GM12878 (cell line): ENCODE measurements at regions of chr10 and their contacts with region 1.

Region 1: DNA sequence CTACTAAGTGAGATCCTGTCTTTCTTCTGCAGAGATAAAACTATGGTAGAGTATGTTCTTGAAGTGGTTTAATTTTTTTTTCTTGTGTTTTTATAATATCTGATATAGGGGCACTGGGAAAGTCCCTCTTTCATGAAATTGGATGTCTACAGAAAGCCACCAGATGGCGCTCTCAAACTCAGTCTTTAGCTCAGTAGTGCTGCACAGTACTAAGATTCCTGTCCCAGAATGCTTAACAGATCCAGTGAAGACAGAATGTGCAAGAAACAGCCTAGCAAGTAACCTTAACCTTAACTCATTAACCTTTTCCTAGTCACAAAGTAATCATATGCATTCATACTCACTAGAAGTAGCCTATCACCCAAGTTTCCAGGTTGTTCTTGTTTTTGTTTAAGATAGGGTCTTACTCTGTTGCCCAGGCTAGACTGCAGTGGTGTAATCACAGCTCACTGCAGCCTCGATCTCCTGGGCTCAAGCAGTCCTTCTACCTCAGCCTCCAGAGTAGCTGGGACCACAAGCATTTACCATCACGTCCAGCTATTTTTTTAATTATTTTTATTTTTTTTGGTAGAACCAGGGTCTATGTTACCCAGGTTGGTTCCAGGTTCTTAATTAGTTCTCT is 56.7 kb downstream of the IDE start:
- DNase-seq: peak; percentile 38
- ATAC-seq: peak; percentile 100
- H3K4me3 ChIP-seq: no peak overlapping the region
- H3K27ac ChIP-seq: no peak overlapping the region
- H3K4me1 ChIP-seq: no peaks in the 10 kb centered on the region
- H3K27me3 ChIP-seq: no peaks in the 10 kb centered on the region
- CTCF ChIP-seq: peak; percentile 69 to 81 (median 74)
- EP300 ChIP-seq: no peak
- POLR2A ChIP-seq: no peak
- RAD21 ChIP-seq: peak; percentile 76

Region 2: DNA sequence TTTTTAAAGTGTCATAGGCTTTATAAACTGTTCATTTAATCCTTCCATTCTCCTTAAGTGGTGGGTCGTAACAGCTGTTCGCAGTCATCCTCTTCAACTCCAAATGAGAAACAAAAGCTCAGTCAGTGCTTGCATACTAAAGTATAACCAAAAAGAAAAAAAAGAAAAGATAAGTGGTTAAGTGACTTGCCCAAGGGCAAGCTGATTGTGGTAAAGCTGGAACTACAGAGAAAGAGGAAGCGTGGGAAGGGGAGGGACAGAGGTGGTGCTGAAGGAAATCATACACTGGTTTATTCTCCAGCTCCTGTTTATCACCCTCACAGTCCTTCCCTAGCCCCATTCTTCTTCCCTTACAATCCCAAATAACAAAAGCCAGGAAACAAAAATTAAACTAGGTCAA is 27.2 kb after region 1 on chr10:
- CTCF ChIA-PET with region 1: interaction called, 11 read pairs
- POLR2A ChIA-PET with region 1: no interaction called
- RAD21 ChIA-PET with region 1: no interaction called
- SMC1A ChIA-PET with region 1: interaction called, 7 read pairs
- in situ Hi-C with region 1: no loop called
- intact Hi-C with region 1: no loop called
- DNase-seq: peak; percentile 35
- ATAC-seq: peak; percentile 78
- H3K4me3 ChIP-seq: no peak overlapping the region
- H3K27ac ChIP-seq: no peak overlapping the region
- H3K4me1 ChIP-seq: peaks cover 8% of the 10 kb centered on the region
- H3K27me3 ChIP-seq: no peaks in the 10 kb centered on the region
- CTCF ChIP-seq: no peak
- EP300 ChIP-seq: no peak
- POLR2A ChIP-seq: no peak
- RAD21 ChIP-seq: no peak

Region 3: DNA sequence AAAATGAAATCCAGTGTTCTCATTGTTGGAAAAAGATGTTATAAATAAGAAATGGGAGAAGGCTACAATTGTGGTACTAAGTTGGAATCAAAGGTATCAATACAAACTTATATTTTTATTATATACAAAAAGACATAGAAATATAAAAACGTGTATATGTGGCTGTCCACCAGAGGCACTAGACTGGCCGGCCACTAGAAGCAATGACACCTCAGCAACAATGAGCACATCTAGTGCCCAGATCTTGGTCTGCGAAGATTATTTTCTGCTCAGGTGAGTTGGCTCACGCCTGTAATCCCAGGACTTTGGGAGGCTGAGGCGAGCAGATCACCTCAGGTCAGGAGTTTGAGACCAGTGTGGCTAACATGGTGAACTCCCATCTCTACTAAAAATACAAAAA is 35.2 kb after region 1 on chr10:
- CTCF ChIA-PET with region 1: interaction called, 10 read pairs
- POLR2A ChIA-PET with region 1: no interaction called
- RAD21 ChIA-PET with region 1: interaction called, 3 read pairs
- SMC1A ChIA-PET with region 1: interaction called, 7 read pairs
- in situ Hi-C with region 1: no loop called
- intact Hi-C with region 1: no loop called
- DNase-seq: no peak
- ATAC-seq: peak; percentile 72
- H3K4me3 ChIP-seq: no peak overlapping the region
- H3K27ac ChIP-seq: no peak overlapping the region
- H3K4me1 ChIP-seq: peaks cover 15% of the 10 kb centered on the region
- H3K27me3 ChIP-seq: no peaks in the 10 kb centered on the region
- CTCF ChIP-seq: peak in 2 of 3 experiments; percentile 35 to 40; a peak in 3 of 6 replicates
- EP300 ChIP-seq: no peak
- POLR2A ChIP-seq: no peak
- RAD21 ChIP-seq: no peak

Region 4: GRCh38 chr10:92567952-92568600 is 50.9 kb after region 1 on chr10:
- CTCF ChIA-PET with region 1: interaction called, 179 read pairs
- POLR2A ChIA-PET with region 1: interaction called, 3 read pairs
- RAD21 ChIA-PET with region 1: interaction called, 69 read pairs
- SMC1A ChIA-PET with region 1: interaction called, 106 read pairs
- in situ Hi-C with region 1: loop called (anchors 5 kb)
- intact Hi-C with region 1: no loop called
- DNase-seq: no peak
- ATAC-seq: peak; percentile 72
- H3K4me3 ChIP-seq: peak overlapping the region; percentile 38; the same call in 1 of the 2 replicates
- H3K27ac ChIP-seq: 0 out of 2 replicates have a peak overlapping the region, but pooled peaks have one; percentile 34
- H3K4me1 ChIP-seq: peaks cover 10% of the 10 kb centered on the region
- H3K27me3 ChIP-seq: no peaks in the 10 kb centered on the region
- CTCF ChIP-seq: no peak
- EP300 ChIP-seq: no peak
- POLR2A ChIP-seq: no peak
- RAD21 ChIP-seq: no peak

Region 5: DNA sequence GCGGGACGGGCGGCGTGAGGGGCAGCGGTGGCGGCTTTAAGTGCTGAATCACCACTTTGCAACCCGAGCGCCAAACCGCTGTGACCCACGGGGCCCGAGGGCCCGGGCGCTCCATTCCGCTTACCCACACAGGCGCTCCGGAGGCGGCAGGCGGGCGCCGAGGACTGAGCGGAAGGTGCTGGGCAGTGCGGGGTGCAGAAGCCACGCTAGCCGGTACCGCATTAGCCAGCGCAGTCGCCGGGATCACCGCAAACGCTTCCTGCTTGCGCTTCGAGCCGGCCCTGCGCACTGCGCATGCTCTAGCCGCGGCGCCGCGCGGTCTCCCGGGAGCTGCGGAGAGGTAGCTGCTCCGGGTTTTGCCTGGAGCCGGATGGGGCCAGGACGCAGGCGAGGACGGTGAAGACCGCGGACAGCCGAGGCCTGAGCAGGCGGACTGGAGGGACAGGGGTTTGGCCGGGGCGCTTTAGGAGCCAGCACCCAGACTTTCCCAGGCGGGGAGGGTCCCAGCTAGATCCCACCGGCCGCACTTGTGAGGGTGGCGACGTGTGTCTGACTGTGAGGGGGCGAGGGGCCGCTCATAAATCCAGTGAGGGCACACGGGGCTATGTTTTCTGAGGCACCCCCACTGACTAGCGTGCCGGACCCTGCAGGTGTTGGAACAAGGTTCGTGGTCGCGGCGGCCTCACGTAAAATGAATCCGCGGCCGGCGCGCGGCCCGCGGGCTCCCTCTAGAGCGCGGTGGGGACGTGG is 56.8 kb after region 1 on chr10 and contains the start of gene IDE:
- CTCF ChIA-PET with region 1: interaction called, 179 read pairs
- POLR2A ChIA-PET with region 1: interaction called, 4 read pairs
- RAD21 ChIA-PET with region 1: interaction called, 69 read pairs
- SMC1A ChIA-PET with region 1: interaction called, 106 read pairs
- in situ Hi-C with region 1: loop called (anchors 5 kb)
- intact Hi-C with region 1: loop called (anchors 1 kb)
- DNase-seq: peak; percentile 45
- ATAC-seq: peak; percentile 82
- H3K4me3 ChIP-seq: peak within 1 kb of the TSS; percentile 82
- H3K27ac ChIP-seq: peak within 1 kb of the TSS; percentile 92
- H3K4me1 ChIP-seq: peaks cover 4% of the 10 kb centered on the region
- H3K27me3 ChIP-seq: no peaks in the 10 kb centered on the region
- CTCF ChIP-seq: peak; percentile 94 to 96 (median 94)
- EP300 ChIP-seq: no peak
- POLR2A ChIP-seq: peak; percentile 93
- RAD21 ChIP-seq: peak; percentile 88
- polyA plus RNA-seq, gene IDE: 11.6 to 13.1 TPM

Region 6: GRCh38 chr10:92592761-92593618 is 75.8 kb after region 1 on chr10 and contains the start of gene KIF11:
- CTCF ChIA-PET with region 1: interaction called, 12 read pairs
- POLR2A ChIA-PET with region 1: no interaction called
- RAD21 ChIA-PET with region 1: interaction called, 5 read pairs
- SMC1A ChIA-PET with region 1: no interaction called
- in situ Hi-C with region 1: no loop called
- intact Hi-C with region 1: no loop called
- DNase-seq: peak; percentile 88
- ATAC-seq: peak; percentile 81
- H3K4me3 ChIP-seq: peak within 1 kb of the TSS; percentile 88
- H3K27ac ChIP-seq: peak within 1 kb of the TSS; percentile 95
- H3K4me1 ChIP-seq: peaks cover 7% of the 10 kb centered on the region
- H3K27me3 ChIP-seq: no peaks in the 10 kb centered on the region
- CTCF ChIP-seq: no peak
- EP300 ChIP-seq: peak in 1 of 2 experiments; percentile 10; a peak in 1 of 4 replicates
- POLR2A ChIP-seq: peak; percentile 88
- RAD21 ChIP-seq: no peak
- polyA plus RNA-seq, gene KIF11: 14.1 to 17.9 TPM

Region 7: DNA sequence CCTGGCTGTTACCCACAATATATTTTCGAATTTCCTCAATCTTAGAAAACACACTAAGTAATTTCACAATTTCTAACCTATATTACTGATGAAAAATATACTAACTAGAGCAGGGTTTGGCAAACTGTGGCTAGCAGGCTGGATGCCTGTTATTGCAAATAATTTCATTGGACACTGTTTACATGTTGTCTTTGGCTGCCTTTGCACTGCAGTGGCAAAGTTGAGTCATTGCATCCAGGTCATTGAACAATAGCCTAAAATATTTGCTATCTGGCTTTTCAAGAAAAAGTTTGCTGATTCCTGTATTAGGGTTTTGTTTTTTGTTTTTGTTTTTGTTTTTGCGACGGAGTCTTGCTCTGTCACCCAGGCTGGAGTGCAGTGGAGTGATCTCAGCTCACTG is 123.0 kb after region 1 on chr10:
- CTCF ChIA-PET with region 1: interaction called, 3 read pairs
- POLR2A ChIA-PET with region 1: no interaction called
- RAD21 ChIA-PET with region 1: no interaction called
- SMC1A ChIA-PET with region 1: interaction called, 3 read pairs
- in situ Hi-C with region 1: no loop called
- intact Hi-C with region 1: loop called (anchors 10 kb)
- DNase-seq: no peak
- ATAC-seq: no peak
- H3K4me3 ChIP-seq: no peak overlapping the region
- H3K27ac ChIP-seq: no peak overlapping the region
- H3K4me1 ChIP-seq: no peaks in the 10 kb centered on the region
- H3K27me3 ChIP-seq: no peaks in the 10 kb centered on the region
- CTCF ChIP-seq: no peak
- EP300 ChIP-seq: no peak
- POLR2A ChIP-seq: no peak
- RAD21 ChIP-seq: no peak

Region 8: GRCh38 chr10:92834986-92835385 is 317.8 kb after region 1 on chr10:
- CTCF ChIA-PET with region 1: no interaction called
- POLR2A ChIA-PET with region 1: no interaction called
- RAD21 ChIA-PET with region 1: no interaction called
- SMC1A ChIA-PET with region 1: no interaction called
- in situ Hi-C with region 1: no loop called
- intact Hi-C with region 1: no loop called
- DNase-seq: no peak
- ATAC-seq: no peak
- H3K4me3 ChIP-seq: no peak overlapping the region
- H3K27ac ChIP-seq: no peak overlapping the region
- H3K4me1 ChIP-seq: no peaks in the 10 kb centered on the region
- H3K27me3 ChIP-seq: no peaks in the 10 kb centered on the region
- CTCF ChIP-seq: no peak
- EP300 ChIP-seq: no peak
- POLR2A ChIP-seq: no peak
- RAD21 ChIP-seq: no peak